ENCODE measurements at regions of chr19 and their contacts with region 1.

Region 1: GRCh38 chr19:12139885-12140547 is at the start of gene ZNF20:
- DNase-seq: peak; percentile 97
- H3K4me3 ChIP-seq: peak within 1 kb of the TSS; percentile 74 to 90 (median 81)
- H3K27ac ChIP-seq: peak within 1 kb of the TSS; percentile 82 to 90 (median 88)
- H3K4me1 ChIP-seq: peaks cover 0 to 24% (median 18%) of the 10 kb centered on the region in 4 donors
- H3K27me3 ChIP-seq: no peaks in the 10 kb centered on the region
- CTCF ChIP-seq: no peak
- EP300 ChIP-seq: no peak
- POLR2A ChIP-seq: peak in 1 of 2 donors; percentile 55
- total RNA-seq, gene ZNF20: 2.2 to 8.0 (median 2.6) TPM

Region 2: GRCh38 chr19:11881151-11881800 is 258.7 kb before region 1 on chr19:
- intact Hi-C with region 1: loop called (anchors 2 kb)
- DNase-seq: no peak
- H3K4me3 ChIP-seq: no peak overlapping the region
- H3K27ac ChIP-seq: no peak overlapping the region
- H3K4me1 ChIP-seq: peaks cover 0 to 6% (median 3%) of the 10 kb centered on the region in 4 donors
- H3K27me3 ChIP-seq: no peaks in the 10 kb centered on the region
- CTCF ChIP-seq: peak; percentile 30 to 79 (median 71)
- EP300 ChIP-seq: no peak
- POLR2A ChIP-seq: no peak

Region 3: GRCh38 chr19:11924886-11925650 is 214.9 kb before region 1 on chr19 and contains the start of gene ZNF700:
- intact Hi-C with region 1: loop called (anchors 2 kb)
- DNase-seq: peak; percentile 97
- H3K4me3 ChIP-seq: peak within 1 kb of the TSS; percentile 64 to 96 (median 81)
- H3K27ac ChIP-seq: peak within 1 kb of the TSS; percentile 84 to 97 (median 94)
- H3K4me1 ChIP-seq: peaks cover 0 to 27% (median 20%) of the 10 kb centered on the region in 4 donors
- H3K27me3 ChIP-seq: no peaks in the 10 kb centered on the region
- CTCF ChIP-seq: no peak
- EP300 ChIP-seq: no peak
- POLR2A ChIP-seq: peak; percentile 36 to 87
- total RNA-seq, gene ZNF700: 13.7 to 19.7 (median 15.0) TPM

Region 4: DNA sequence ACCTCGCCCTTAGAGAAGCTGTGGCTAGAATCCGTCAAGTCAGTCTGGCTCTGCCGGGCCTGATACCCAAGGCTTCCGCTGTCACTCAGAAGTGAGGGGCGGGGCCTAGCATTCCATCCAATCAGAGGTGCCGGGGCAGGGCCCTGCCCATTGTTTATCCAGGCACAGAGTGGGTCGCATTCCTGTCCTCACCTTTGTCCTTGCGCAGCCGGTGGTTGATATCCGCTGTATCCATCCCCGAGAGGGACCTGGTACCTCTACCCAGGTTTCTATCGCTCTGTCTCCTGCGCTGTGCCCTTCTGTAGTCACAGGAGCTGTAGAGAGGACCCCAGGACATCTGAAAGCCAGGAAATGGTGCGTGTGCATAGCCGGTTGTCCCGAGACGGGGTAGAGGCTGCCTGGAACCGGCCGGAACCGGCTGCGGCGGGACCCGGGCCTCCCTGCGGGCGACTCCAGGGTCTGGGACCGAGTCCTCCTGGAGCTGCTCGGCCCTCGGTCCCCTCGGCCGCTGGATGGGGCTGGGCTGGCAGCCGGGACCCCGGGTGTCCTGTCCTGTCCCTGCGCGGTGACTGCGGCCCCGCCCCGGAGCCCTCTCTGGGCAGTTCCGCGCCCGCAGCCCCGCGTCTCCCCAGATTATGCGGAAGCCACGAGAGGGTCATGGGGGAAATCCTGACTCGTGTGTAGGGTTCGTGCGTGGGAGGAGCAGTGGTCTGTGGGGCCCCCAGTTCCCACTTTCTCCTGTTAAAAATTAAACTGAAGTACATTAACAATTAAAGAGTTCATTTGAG is 175.0 kb before region 1 on chr19 and contains the start of gene ZNF763:
- intact Hi-C with region 1: loop called (anchors 2 kb)
- DNase-seq: peak; percentile 97
- H3K4me3 ChIP-seq: peak within 1 kb of the TSS; percentile 66 to 90 (median 70)
- H3K27ac ChIP-seq: peak within 1 kb of the TSS; percentile 90 to 95 (median 93)
- H3K4me1 ChIP-seq: peaks cover 0 to 20% (median 14%) of the 10 kb centered on the region in 4 donors
- H3K27me3 ChIP-seq: no peaks in the 10 kb centered on the region
- CTCF ChIP-seq: no peak
- EP300 ChIP-seq: peak in 2 of 4 donors; percentile 29 to 42
- POLR2A ChIP-seq: peak; percentile 13 to 45
- total RNA-seq, gene ZNF763: 2.3 to 11.9 (median 3.3) TPM

Region 5: DNA sequence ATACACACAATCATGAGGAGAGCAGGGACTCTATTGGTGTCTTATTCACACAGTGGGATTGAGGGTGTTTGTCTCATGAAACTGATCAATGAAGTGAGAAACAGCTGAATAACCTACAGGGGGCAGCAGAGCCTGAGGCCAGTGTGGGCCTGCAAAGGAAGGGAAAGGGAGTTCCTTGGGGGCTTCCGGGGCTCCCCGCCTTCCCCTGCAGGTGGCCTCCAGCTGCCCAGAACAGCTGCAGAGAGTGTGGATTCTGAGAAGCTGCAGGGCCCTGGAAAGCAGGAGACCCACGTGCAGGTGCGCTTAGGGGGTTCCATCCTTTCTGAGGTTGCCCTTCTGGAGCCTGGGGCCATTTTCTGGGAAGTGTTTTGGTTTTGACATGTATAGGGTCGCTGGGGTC is 155.0 kb before region 1 on chr19:
- intact Hi-C with region 1: no loop called
- DNase-seq: no peak
- H3K4me3 ChIP-seq: no peak overlapping the region
- H3K27ac ChIP-seq: no peak overlapping the region
- H3K4me1 ChIP-seq: peaks cover 0 to 8% (median 0%) of the 10 kb centered on the region in 4 donors
- H3K27me3 ChIP-seq: no peaks in the 10 kb centered on the region
- CTCF ChIP-seq: peak in 1 of 4 experiments; percentile 11
- EP300 ChIP-seq: no peak
- POLR2A ChIP-seq: no peak

Region 6: GRCh38 chr19:12055783-12056182 is 84.2 kb before region 1 on chr19:
- intact Hi-C with region 1: loop called (anchors 1 kb)
- DNase-seq: no peak
- H3K4me3 ChIP-seq: no peak overlapping the region
- H3K27ac ChIP-seq: no peak overlapping the region
- H3K4me1 ChIP-seq: peaks cover 0 to 19% (median 14%) of the 10 kb centered on the region in 4 donors
- H3K27me3 ChIP-seq: no peaks in the 10 kb centered on the region
- CTCF ChIP-seq: no peak
- EP300 ChIP-seq: no peak
- POLR2A ChIP-seq: no peak

Region 7: DNA sequence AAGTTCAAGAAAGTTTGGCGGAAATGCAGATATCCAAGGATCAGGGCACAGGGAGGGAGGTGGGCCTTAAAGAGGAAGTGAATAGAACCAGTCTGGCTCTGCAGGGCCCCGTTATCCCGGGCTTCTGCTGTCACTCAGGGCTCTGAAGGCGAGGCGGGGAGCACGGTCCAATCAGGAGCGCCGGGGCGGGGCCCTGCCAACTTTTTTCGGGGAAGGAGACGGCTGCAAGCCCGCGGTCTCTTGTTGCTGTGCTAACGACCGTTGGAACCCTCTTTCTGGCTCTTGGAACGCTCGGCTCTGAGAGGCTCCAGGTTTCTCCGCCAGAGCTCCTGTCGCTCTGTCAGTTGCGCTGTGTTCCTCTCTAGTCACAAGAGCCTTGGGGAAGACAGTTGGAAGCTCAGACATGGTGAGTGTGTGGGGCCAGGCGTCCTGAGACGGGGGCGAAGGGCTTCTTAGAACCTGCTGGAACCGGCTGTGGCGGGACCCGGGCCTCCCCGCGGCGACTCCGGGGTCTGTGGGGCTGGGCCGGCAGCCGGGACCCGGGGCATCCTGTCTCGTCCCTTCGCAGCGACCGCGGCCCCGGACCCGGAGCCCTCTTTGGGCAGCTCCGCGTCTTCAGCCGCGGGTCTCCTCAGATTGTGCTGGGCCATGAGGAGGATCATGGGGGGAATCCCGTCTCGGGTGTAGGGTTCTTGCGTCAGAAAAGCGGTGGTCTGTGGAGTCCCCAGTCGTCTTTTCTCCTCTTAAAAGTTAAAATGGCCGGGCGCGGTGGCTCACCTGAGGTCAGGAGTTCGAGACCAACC is 47.8 kb before region 1 on chr19:
- intact Hi-C with region 1: loop called (anchors 1 kb)
- DNase-seq: peak; percentile 92
- H3K4me3 ChIP-seq: peak overlapping the region; percentile 51 to 78 (median 71)
- H3K27ac ChIP-seq: peak overlapping the region; percentile 79 to 86 (median 80)
- H3K4me1 ChIP-seq: peaks cover 0 to 12% (median 8%) of the 10 kb centered on the region in 4 donors
- H3K27me3 ChIP-seq: no peaks in the 10 kb centered on the region
- CTCF ChIP-seq: no peak
- EP300 ChIP-seq: no peak
- POLR2A ChIP-seq: no peak

Region 8: DNA sequence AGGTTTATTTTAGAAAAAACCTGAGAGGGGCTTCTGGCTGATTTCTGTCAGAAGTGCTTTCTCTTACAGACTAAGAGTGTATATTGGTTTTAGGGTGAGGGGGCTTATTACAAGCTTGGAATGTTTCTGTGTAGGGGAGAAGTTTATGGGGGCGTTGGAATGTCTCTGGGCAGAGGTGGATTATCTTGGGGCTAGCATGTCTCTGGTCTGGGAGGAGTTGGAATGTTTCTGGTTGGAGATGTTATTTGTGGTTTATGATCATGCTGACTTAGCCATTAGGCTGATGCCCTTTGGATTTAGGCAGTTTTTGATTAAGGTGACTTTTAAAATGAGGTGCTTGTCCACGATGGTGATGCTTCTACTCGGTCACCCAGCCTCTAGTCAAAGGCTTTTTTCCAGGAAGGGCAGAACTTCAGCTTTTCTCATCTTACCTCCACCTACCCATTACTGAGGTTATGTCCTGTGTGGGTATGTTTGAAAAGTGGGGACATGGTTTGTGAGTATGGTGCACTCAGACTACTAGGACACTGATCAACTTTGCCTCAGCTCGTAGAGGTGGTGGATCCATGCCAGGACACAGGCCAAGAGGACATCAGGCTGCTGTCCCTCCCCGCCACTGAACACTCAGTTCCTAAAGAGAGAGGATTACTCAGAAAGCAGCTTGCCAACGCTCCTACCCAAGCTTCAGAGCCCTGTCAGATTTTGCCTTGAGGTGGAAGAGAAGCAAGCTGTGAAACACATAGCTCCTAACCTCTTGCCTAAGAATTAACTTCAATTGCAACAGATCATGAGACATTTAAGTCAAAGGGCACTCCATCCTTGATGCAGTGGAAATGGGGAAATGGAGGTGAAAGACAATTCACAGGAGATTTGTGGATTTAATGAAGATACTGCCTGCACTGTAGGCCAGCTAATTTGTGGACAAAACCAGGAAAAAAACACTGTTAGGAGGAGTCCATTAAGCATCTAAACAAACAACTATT is 91.0 kb after region 1 on chr19:
- intact Hi-C with region 1: no loop called
- DNase-seq: no peak
- H3K4me3 ChIP-seq: no peak overlapping the region
- H3K27ac ChIP-seq: no peak overlapping the region
- H3K4me1 ChIP-seq: no peaks in the 10 kb centered on the region
- H3K27me3 ChIP-seq: no peaks in the 10 kb centered on the region
- CTCF ChIP-seq: no peak
- EP300 ChIP-seq: no peak
- POLR2A ChIP-seq: no peak

Measured in sigmoid colon (tissue), 7 donors.